Breast epithelium (tissue), 4 donors: ENCODE measurements at regions of chr2 and their contacts with region 1.

Region 1: GRCh38 chr2:163171786-163172531 is 333.4 kb upstream of the KCNH7 start:
- DNase-seq: no peak
- H3K4me3 ChIP-seq: no peak overlapping the region
- H3K27ac ChIP-seq: no peak overlapping the region
- H3K4me1 ChIP-seq: no peaks in the 10 kb centered on the region
- H3K27me3 ChIP-seq: no peaks in the 10 kb centered on the region
- CTCF ChIP-seq: no peak
- POLR2A ChIP-seq: no peak

Region 2: GRCh38 chr2:163155279-163155883 is 16.6 kb before region 1 on chr2:
- intact Hi-C with region 1: no loop called
- DNase-seq: no peak
- H3K4me3 ChIP-seq: no peak overlapping the region
- H3K27ac ChIP-seq: no peak overlapping the region
- H3K4me1 ChIP-seq: no peaks in the 10 kb centered on the region
- H3K27me3 ChIP-seq: no peaks in the 10 kb centered on the region
- CTCF ChIP-seq: peak; percentile 56 to 75 (median 56)
- POLR2A ChIP-seq: no peak

Region 3: GRCh38 chr2:163248376-163249253 is 76.7 kb after region 1 on chr2:
- intact Hi-C with region 1: no loop called
- DNase-seq: no peak
- H3K4me3 ChIP-seq: no peak overlapping the region
- H3K27ac ChIP-seq: no peak overlapping the region
- H3K4me1 ChIP-seq: no peaks in the 10 kb centered on the region
- H3K27me3 ChIP-seq: no peaks in the 10 kb centered on the region
- CTCF ChIP-seq: no peak
- POLR2A ChIP-seq: no peak

Region 4: GRCh38 chr2:163324429-163325076 is 152.6 kb after region 1 on chr2:
- intact Hi-C with region 1: loop called (anchors 10 kb)
- DNase-seq: no peak
- H3K4me3 ChIP-seq: no peak overlapping the region
- H3K27ac ChIP-seq: no peak overlapping the region
- H3K4me1 ChIP-seq: no peaks in the 10 kb centered on the region
- H3K27me3 ChIP-seq: no peaks in the 10 kb centered on the region
- CTCF ChIP-seq: no peak
- POLR2A ChIP-seq: no peak

Region 5: DNA sequence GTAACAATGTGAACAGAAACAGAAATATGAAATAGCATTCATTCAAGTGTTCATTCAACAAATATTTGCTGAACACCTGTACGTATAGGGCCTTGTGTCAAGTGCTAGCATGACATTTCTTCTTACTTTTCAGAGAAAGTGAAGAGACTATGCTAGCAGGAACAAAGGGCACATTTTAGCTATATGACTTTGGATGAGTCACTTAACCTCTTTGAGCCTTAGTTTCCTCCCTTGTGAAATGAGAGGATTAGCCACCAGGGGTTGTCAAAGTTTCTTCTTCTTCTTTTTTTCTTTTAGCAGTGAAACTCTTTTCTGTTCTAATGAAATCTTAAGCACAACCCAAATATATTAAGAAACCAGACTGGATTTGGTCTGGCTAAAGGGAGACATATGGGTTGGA is 510.7 kb after region 1 on chr2:
- intact Hi-C with region 1: no loop called
- DNase-seq: no peak
- H3K4me3 ChIP-seq: no peak overlapping the region
- H3K27ac ChIP-seq: no peak overlapping the region
- H3K4me1 ChIP-seq: no peaks in the 10 kb centered on the region
- H3K27me3 ChIP-seq: no peaks in the 10 kb centered on the region
- CTCF ChIP-seq: no peak
- POLR2A ChIP-seq: no peak